ENCODE measurements at regions of chr3 and their contacts with region 1.

Region 1: GRCh38 chr3:172673210-172673679 is 37.6 kb downstream of the NCEH1 start:
- DNase-seq: no peak
- H3K4me3 ChIP-seq: no peak overlapping the region
- H3K27me3 ChIP-seq: no peaks in the 10 kb centered on the region
- CTCF ChIP-seq: peak; percentile 74

Region 2: DNA sequence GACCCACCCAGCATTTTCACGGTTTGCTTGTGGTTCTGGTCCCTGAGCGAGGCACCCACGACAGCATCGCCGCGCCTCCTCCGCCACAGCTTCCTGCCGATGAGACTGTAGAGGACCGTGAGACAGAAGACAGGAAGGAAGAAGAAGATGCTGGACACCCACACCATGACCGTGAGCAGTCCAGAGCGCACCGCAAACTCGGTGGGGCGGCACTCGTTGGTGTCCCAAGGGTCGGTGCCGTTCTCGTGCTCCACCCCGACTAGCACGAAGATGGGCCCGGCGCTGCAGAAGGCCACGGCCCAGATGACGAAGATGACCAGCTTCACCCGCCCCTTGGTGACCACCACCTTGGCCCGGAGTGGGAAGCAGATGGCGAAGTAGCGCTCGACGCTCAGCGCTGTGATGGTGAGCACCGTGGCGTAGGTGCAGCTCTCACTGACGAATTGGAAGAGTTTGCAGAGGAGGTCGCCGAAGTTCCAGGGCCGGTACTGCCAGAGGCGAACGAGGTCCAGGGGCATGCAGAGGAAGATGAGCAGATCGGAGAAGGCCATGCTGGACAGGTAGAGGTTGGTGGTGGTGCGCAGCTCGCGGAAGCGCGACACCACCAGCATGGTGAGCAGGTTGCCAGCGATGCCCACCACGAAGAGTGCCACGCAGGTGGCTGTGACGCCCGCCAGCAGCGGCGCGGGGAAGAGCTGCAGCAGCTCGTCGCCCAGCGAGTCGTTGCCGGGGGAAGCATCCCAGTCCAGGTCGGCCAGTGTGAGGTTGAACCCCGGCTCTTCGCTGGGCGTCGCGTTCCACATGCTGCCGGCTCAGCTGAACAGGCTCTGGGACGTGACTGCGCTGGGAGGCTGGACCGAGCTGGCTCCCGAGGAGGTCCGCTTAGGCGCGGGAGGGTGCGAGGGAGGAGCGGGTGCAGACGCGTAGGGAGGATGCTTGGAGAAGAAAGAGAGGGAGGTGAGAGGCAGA is 225.3 kb before region 1 on chr3 and contains the start of gene GHSR:
- CTCF ChIA-PET with region 1: no interaction called
- POLR2A ChIA-PET with region 1: no interaction called
- DNase-seq: no peak
- H3K4me3 ChIP-seq: no peak within 1 kb of the TSS
- H3K27me3 ChIP-seq: peaks cover 34% of the 10 kb centered on the region
- CTCF ChIP-seq: no peak
- polyA plus RNA-seq, gene GHSR: not detected in 2 replicates

Region 3: GRCh38 chr3:172522871-172523818 is 150.1 kb before region 1 on chr3 and contains the start of gene TNFSF10:
- CTCF ChIA-PET with region 1: no interaction called
- POLR2A ChIA-PET with region 1: no interaction called
- DNase-seq: no peak
- H3K4me3 ChIP-seq: no peak within 1 kb of the TSS
- H3K27me3 ChIP-seq: no peaks in the 10 kb centered on the region
- CTCF ChIP-seq: no peak
- polyA plus RNA-seq, gene TNFSF10: 0.17 TPM in 1 of 2 replicates, not detected in the other

Region 4: GRCh38 chr3:172685346-172686214 is 12.3 kb after region 1 on chr3:
- CTCF ChIA-PET with region 1: interaction called, 24 read pairs
- POLR2A ChIA-PET with region 1: no interaction called
- DNase-seq: no peak
- H3K4me3 ChIP-seq: no peak overlapping the region
- H3K27me3 ChIP-seq: no peaks in the 10 kb centered on the region
- CTCF ChIP-seq: no peak

Region 5: DNA sequence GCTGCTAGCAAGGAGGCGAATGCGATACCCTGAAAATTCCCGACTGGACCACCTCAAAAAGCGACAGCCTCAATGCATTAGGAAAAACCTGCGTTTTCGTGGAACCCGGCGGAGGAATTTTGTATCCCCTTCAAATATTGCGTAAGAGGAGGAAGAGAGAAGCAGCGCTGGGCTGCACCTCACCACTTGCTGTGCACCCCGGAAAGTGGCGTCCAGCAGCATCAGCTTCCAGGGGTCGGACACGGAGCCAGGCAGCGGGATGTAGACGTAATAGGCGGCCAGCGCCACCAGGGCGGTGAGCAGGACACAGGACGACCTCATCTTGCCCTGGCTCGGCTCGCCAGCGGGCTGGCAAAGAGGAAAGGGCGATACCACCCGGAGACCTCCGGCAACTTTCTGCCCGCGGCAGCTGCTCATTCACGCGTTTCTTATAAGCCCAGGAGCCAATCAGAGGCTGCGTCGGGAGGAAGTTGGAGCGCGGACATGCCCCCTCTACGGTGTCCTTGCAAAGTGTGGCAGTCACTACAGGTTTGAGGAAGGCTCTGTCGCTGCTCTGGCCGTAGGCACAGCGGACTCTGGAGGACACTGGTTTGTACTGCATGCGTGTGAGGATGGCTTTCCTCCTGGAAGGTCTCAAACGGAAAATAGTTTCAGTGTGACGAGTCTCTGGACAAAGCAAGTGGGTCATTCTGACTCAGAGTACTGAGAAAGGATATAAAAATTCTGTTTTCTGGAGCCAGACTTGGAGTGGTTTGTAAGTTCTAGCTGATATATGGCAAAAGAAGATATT is 37.6 kb after region 1 on chr3 and contains the start of gene NCEH1:
- CTCF ChIA-PET with region 1: interaction called, 14 read pairs
- POLR2A ChIA-PET with region 1: no interaction called
- DNase-seq: peak; percentile 99
- H3K4me3 ChIP-seq: peak within 1 kb of the TSS; percentile 78
- H3K27me3 ChIP-seq: no peaks in the 10 kb centered on the region
- CTCF ChIP-seq: peak; percentile 82
- polyA plus RNA-seq, gene NCEH1: 14.8 and 17.8 TPM in 2 replicates

Region 6: GRCh38 chr3:172750368-172751174 is 77.3 kb after region 1 on chr3 and contains the start of gene ECT2:
- CTCF ChIA-PET with region 1: interaction called, 26 read pairs
- POLR2A ChIA-PET with region 1: interaction called, 4 read pairs
- DNase-seq: peak; percentile 100
- H3K4me3 ChIP-seq: peak within 1 kb of the TSS; percentile 78
- H3K27me3 ChIP-seq: no peaks in the 10 kb centered on the region
- CTCF ChIP-seq: peak; percentile 74
- polyA plus RNA-seq, gene ECT2: 15.3 and 30.9 TPM in 2 replicates

Region 7: GRCh38 chr3:172824229-172824628 is 151.0 kb after region 1 on chr3:
- CTCF ChIA-PET with region 1: no interaction called
- POLR2A ChIA-PET with region 1: no interaction called
- DNase-seq: no peak
- H3K4me3 ChIP-seq: no peak overlapping the region
- H3K27me3 ChIP-seq: no peaks in the 10 kb centered on the region
- CTCF ChIP-seq: no peak

Measured in BJ (cell line).